PC-9 (cell line): ENCODE measurements at regions of chr6 and their contacts with region 1.

Region 1: GRCh38 chr6:134063966-134064445 is 11.6 kb upstream of the SLC2A12 start:
- DNase-seq: peak; percentile 62 to 77
- H3K4me3 ChIP-seq: no peak overlapping the region
- H3K27ac ChIP-seq: no peak overlapping the region
- H3K4me1 ChIP-seq: peaks cover 13% of the 10 kb centered on the region
- H3K27me3 ChIP-seq: no peaks in the 10 kb centered on the region
- CTCF ChIP-seq: peak; percentile 95

Region 2: DNA sequence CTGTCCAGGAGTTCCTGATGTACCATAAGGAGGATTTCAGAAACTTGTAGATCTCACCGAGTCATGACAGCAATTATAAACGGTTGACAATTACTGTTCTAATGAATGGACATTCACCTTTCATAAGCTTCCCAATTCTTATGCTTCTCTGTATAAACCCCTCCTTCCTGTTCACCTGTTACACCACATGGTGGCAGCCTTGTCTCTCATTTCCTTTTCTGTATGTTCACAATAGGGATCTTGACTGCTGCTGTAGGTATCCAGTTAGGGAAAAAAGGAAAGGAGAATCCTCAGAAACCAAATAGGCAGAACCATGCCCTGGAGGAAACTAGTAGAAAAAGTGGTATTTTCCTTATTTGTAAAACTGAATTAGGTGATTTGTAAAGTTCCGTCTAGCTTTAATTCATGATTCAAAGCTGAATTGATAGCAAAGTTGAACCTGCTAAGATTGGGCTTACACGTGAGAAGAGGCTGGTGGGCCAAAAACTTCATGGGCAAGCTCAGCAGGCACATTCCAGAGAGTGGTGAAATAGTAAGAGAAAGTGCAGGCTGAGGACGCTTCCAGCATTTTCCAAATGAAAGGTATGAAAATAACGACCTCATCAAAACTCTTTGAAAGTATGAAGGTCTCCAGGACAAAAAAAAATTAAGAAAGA is 139.9 kb before region 1 on chr6:
- CTCF ChIA-PET with region 1: interaction called, 13 read pairs
- POLR2A ChIA-PET with region 1: no interaction called
- intact Hi-C with region 1: loop called (anchors 1 kb)
- DNase-seq: peak; percentile 58 to 66
- H3K4me3 ChIP-seq: no peak overlapping the region
- H3K27ac ChIP-seq: no peak overlapping the region
- H3K4me1 ChIP-seq: no peaks in the 10 kb centered on the region
- H3K27me3 ChIP-seq: no peaks in the 10 kb centered on the region
- CTCF ChIP-seq: peak; percentile 98

Region 3: DNA sequence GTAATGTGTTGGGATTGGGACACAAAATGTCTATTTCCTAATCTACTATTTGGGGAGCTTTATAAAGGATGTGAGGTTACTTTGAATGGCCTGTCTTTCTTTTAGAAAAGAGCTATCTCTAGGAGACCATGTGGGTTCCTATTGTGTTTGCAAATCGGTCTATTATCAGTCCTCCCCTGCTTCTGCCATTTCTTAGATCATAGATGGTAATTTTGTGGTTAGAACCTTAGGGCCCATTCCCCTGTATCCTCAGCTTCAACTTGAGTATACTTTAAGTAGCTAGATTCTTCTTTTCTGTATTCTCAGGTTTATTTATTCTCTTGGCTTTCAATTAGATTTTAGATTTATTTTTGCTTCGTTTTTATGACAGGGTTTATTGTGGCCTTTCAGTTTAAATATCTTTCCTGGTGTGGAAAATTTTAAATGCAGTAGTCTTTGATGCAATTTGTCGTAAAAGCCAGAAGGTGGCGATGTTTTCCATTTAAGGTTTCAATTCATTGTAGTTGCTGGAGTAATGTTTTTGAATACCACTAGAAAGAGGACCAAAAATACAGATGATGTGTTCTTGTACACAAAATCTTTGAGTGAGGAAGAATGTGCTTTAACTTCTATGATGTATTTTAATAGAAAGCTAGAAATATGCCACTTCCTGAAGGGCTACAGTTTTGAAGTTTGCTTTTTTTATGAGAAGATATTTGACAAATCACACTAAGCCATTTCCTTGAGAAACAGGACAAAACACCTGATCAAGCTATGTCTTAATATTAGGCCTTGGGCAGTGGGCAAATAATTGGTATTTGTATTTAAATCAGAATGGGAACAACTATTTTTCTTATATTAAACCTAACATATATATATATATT is 90.7 kb before region 1 on chr6:
- CTCF ChIA-PET with region 1: interaction called, 10 read pairs
- POLR2A ChIA-PET with region 1: interaction called, 3 read pairs
- intact Hi-C with region 1: loop called (anchors 1 kb)
- DNase-seq: peak in 1 of 2 experiments; percentile 59
- H3K4me3 ChIP-seq: no peak overlapping the region
- H3K27ac ChIP-seq: peak overlapping the region; percentile 35
- H3K4me1 ChIP-seq: peaks cover 6% of the 10 kb centered on the region
- H3K27me3 ChIP-seq: no peaks in the 10 kb centered on the region
- CTCF ChIP-seq: peak; percentile 98

Region 4: DNA sequence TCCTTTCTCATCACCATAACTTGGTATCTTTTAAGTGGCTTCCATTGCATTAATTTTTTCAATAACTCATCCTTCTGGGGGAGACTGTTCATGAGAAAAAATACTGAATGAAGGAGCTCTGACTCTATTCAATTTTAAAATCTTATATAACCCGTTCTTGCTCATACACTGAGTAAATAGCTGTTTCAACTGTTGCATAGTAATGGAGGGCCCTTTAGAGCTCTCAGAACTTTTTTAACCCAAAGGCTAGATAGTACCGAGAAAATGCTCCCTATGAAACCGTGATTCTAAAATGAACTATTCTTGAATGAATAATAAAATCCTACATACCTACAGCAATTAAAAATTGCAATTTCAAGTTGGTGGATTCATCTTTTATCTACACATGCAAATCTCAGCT is 16.9 kb before region 1 on chr6:
- CTCF ChIA-PET with region 1: interaction called, 4 read pairs
- POLR2A ChIA-PET with region 1: interaction called, 12 read pairs
- intact Hi-C with region 1: no loop called
- DNase-seq: no peak
- H3K4me3 ChIP-seq: no peak overlapping the region
- H3K27ac ChIP-seq: no peak overlapping the region
- H3K4me1 ChIP-seq: peaks cover 6% of the 10 kb centered on the region
- H3K27me3 ChIP-seq: no peaks in the 10 kb centered on the region
- CTCF ChIP-seq: no peak

Region 5: DNA sequence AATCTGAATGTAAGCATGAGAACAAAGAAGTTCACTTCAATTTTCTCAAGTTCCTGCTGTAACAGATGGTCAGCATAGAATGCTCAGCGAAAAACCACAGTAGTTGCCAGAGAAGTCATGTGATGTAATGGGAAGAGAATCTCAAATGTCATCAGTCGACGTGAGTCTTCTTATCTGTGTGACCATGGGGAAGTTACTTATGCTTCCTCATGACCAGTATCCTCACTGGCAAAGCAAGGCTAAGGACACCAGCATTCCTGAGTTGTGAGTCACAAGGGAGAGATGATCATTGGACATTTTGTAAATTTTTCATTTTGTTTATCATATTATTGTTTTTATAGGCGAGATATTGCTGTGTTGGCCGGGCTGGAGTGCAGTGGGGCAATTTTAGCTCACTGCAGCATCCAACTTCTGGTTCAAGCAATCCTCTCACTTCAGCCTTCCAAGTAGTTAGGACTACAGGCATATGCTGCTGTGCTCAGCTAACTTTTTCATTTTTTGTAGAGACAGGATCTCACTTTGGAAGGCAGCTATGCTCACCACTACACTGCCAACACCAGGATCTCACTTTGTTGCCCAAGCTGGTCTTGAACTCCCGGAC is 232.0 kb after region 1 on chr6:
- CTCF ChIA-PET with region 1: no interaction called
- POLR2A ChIA-PET with region 1: no interaction called
- intact Hi-C with region 1: no loop called
- DNase-seq: peak; percentile 63 to 99
- H3K4me3 ChIP-seq: no peak overlapping the region
- H3K27ac ChIP-seq: peak overlapping the region; percentile 70
- H3K4me1 ChIP-seq: peaks cover 30% of the 10 kb centered on the region
- H3K27me3 ChIP-seq: no peaks in the 10 kb centered on the region
- CTCF ChIP-seq: no peak